AG04450 (cell line): ENCODE measurements at regions of chr20 and their contacts with region 1.

Region 1: DNA sequence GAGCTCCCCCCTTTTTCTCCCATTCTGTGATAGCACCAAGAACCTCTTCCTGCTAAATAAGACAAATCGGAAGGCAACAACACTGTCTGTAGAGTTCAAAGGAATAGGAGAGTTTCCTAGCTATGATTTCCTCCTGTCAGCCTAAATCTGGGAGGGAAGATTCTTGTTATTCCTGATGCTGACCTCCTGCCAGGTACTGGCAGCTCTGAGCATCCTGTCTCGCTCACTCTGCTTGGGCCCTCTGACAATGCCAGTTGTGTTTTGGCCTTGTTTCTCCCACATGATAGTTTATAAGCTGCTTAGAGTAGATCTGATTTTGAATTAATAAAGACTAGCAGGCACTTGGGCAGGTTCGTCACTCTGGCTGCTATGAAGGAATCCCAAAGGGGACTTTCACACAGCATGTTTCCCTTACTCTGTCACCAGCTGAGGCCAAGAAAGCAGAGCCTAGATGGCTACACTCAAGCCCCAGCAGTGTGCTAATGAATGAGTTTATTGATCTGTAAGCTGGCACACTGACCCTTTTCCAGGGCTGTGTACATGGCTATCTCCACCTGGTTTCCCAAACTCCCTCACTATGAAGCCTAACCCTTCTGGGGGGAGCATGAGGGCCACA is 52.3 kb downstream of the UQCC1 start:
- DNase-seq: no peak
- H3K4me3 ChIP-seq: no peak overlapping the region
- H3K27ac ChIP-seq: no peak overlapping the region
- H3K27me3 ChIP-seq: no peaks in the 10 kb centered on the region
- CTCF ChIP-seq: no peak

Region 2: DNA sequence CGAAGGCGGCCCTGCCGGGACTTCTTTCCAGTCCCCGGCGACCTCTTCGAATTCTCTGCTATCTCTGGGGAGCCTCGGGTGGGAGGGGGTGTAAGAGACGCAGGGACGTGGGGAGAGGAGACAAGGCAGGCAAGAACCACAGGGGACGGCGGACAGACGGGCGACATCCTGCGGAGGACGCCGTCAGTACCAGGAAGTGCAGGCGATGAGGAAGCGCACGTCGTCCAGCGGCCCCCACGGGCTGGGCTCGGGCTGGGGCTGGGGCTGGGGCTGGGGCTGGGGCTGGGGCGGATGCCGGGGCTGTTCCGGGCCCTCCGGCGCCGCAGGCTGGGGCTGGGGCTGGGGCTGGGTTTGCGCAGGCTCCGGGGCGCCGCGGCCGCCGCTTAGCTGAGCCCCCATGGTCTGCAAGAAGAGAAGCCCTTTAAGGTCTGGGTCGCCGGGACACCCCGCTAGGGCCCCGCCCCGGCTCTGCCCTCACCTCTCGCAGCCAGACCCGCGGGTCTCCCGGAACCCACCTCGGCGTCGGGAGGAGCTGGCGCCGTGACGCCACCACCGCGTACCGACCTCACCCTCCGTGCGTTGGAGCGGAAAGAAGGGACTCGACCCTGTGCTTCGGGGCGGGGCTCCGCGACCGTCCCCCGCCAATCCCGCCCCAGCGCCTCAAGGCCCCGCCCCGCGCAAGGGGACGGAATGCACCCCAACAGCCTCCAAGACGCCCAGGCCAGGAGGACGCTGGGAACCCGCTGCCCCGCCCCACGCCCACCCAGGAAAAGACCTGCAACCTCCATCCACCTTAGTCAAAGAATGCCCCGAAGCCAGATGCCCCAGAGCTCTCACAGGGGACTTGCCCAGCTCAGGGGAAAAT is 81.7 kb before region 1 on chr20 and contains the start of gene MMP24OS:
- CTCF ChIA-PET with region 1: no interaction called
- POLR2A ChIA-PET with region 1: no interaction called
- DNase-seq: peak; percentile 49
- H3K4me3 ChIP-seq: peak within 1 kb of the TSS; percentile 84
- H3K27ac ChIP-seq: peak within 1 kb of the TSS; percentile 75
- H3K27me3 ChIP-seq: no peaks in the 10 kb centered on the region
- CTCF ChIP-seq: peak; percentile 17; the same call in 1 of the 2 replicates
- polyA plus RNA-seq, gene MMP24OS: 35.3 and 44.9 TPM in 2 replicates

Region 3: DNA sequence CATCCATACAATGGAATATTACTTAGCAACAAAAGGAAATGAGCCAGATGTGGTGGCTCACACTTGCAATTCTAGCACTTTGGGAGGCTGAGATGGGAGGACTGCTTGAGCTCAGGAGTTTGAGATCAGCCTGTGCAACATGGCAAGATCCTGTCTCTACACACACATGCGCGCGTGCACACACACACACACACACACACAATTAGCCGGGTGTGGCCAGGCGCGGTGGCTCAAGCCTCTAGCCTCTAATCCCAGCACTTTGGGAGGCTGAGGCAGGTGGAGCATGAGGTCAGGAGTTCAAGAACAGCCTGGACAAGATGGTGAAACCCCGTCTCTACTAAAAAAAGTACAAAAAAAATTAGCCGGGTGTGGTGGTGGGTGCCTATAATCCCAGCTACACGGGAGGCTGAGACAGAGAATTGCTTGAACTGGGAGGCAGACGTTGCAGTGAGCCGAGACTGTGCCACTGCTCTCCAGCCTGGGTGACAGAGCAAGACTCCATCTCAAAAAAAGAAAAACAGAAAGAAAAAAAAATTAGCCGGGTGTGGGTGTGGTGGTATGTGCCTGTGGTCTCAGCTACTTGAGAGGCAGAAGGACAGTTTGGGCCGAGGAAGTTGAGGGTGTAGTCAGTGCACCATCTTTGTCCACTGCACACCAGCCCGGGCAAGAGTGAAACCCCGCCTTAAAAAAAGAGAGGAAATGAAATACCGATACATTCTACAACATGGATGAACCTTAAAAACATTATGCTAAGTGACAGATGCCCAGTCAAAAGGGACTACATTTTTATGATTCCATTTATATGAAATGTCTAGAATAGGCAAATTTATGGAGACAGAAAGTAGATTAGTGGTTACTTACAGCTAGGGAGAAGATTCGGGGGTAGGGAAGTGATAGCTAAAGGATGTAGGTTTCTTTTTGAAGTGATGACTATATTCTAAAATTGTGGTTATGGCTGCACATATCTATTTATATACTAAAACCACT is 1683.8 kb after region 1 on chr20:
- CTCF ChIA-PET with region 1: no interaction called
- POLR2A ChIA-PET with region 1: interaction called, 12 read pairs
- DNase-seq: no peak
- H3K4me3 ChIP-seq: no peak overlapping the region
- H3K27ac ChIP-seq: no peak overlapping the region
- H3K27me3 ChIP-seq: no peaks in the 10 kb centered on the region
- CTCF ChIP-seq: no peak